ENCODE measurements at regions of chr2 and their contacts with region 1.

Region 1: DNA sequence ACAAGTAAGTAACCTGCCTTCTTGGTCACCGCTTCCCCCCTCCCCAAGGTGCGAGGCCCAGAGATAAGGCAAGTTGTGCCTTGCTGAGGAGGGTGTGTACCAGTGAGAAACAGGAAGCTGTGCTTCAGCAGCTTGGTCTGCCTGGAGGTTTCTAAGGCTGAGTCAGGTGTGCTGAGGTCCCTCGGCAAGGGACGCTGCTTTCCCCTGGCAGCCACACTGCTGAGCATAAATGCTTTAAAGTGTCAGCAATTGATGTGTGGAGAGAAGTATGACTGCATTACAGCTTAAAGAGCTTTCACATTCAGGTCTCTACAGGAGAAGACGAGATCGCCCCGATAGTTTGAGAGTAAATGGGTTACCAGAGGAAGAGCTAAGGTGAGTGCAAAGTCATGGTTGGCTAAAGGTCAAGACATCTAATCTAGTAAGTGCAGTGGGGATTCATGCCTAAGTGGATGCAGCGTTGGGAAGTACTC is 86.9 kb downstream of the LIMS1 start:
- DNase-seq: peak; percentile 85
- ATAC-seq: peak; percentile 99
- H3K4me3 Mint-ChIP-seq: peak overlapping the region; percentile 73
- H3K27ac Mint-ChIP-seq: peak overlapping the region; percentile 91
- H3K4me1 Mint-ChIP-seq: peaks cover 66% of the 10 kb centered on the region
- H3K27me3 Mint-ChIP-seq: no peaks in the 10 kb centered on the region

Region 2: DNA sequence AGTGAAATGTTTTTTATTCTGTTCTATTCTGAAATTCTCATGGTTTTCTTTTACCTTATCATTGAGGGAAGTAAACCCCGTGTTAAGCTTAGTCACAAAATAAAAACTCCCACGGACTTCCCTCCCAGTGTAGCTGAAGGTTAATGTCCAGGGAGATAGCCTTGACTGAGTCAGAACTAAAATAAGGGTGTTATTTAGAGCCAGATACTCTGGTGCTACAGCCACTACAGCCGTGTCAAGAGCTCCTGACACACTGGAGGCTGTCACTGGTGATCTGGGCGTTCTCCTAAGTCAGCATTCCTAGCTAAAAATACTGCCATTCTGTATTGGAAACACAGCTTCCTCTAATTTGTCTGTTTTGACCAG is 16.2 kb after region 1 on chr2:
- CTCF ChIA-PET with region 1: interaction called, 227 read pairs
- POLR2A ChIA-PET with region 1: interaction called, 7 read pairs
- DNase-seq: no peak
- ATAC-seq: no peak
- H3K4me3 Mint-ChIP-seq: no peak overlapping the region
- H3K27ac Mint-ChIP-seq: no peak overlapping the region
- H3K4me1 Mint-ChIP-seq: peaks cover 23% of the 10 kb centered on the region
- H3K27me3 Mint-ChIP-seq: no peaks in the 10 kb centered on the region

Measured in activated CD8-positive, alpha-beta T cell treated with anti-CD3 and anti-CD28 coated beads, Interleukin-2, amount 10 ng/mL, durations not matched to agents 7 days and 5 days (primary cell).